ENCODE measurements at regions of chr1 and their contacts with region 1.

Region 1: DNA sequence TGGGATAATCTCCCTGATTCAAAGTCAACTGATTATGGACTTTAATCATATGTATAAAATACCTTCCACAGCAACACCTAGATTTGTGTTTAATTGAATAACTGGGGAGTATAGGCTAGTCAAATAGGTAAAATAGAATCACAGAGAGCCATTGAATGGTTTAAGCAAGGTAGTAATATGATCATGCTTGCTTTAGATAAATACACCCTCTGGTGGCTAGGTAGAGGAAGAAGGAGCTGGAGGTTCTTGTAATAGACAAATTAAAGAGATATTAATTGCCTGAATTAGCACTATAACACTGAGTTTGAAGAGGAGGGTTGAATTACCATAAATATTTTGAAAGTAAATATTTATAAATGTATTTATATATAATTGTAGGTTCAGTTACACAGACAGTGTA is 40.3 kb downstream of the DIRAS3 start:
- DNase-seq: no peak
- H3K4me3 ChIP-seq: no peak overlapping the region
- H3K27ac ChIP-seq: no peak overlapping the region
- H3K4me1 ChIP-seq: no peaks in the 10 kb centered on the region
- H3K27me3 ChIP-seq: no peaks in the 10 kb centered on the region
- CTCF ChIP-seq: peak in 2 of 3 experiments; percentile 24 to 36; a peak in 2 of 4 replicates
- EP300 ChIP-seq: no peak
- POLR2A ChIP-seq: no peak
- RAD21 ChIP-seq: peak; percentile 56 to 60

Region 2: DNA sequence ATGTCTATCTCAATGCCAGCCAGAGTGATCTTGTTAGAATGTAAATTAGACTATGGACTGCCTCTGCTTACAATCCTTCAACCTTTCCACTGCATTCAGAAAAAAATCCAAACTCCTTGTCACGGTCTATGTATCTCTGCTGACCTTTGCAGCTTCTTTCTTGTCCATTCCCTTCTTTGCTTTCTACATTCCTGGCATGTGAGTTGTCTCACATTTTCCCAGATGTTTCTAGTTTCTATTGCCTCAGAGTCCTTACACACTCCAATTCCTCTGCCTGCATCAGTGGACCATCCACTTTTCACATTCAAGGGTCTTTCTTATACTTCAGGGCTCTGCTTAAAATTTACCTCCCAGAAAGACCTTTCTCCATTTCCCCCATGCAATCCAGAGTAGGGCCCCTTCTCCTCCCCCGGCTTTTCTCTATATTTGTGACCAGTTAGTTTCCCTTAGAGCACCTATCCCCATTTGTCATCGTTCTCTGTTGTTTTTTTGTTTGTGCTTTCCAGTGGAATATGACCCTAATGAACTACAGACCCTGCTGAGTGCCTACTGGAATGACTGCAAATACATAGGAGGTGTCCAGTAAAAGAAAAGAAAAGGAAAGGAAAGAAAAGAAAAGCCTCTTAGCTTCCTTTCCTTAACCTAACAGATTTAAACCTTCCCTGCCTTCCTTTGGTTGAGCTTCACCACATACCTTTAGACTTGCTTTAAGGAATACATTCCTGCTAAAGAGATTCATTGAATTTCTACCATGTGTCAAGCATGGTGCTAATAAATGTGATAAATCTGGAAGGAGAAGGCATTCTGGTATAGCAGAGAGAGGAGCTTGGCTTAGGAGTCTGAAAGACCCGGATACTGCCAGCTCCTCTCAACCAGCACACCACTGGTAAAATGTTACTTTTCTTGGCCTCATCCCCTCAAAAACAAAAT is 61.7 kb before region 1 on chr1:
- CTCF ChIA-PET with region 1: interaction called, 11 read pairs
- POLR2A ChIA-PET with region 1: no interaction called
- DNase-seq: no peak
- H3K4me3 ChIP-seq: no peak overlapping the region
- H3K27ac ChIP-seq: no peak overlapping the region
- H3K4me1 ChIP-seq: no peaks in the 10 kb centered on the region; a peak in 1 of 7 replicates
- H3K27me3 ChIP-seq: no peaks in the 10 kb centered on the region
- CTCF ChIP-seq: no peak
- EP300 ChIP-seq: no peak
- POLR2A ChIP-seq: no peak
- RAD21 ChIP-seq: no peak

Region 3: GRCh38 chr1:67997746-67998145 is 12.3 kb before region 1 on chr1:
- CTCF ChIA-PET with region 1: interaction called, 31 read pairs
- POLR2A ChIA-PET with region 1: no interaction called
- DNase-seq: no peak
- H3K4me3 ChIP-seq: no peak overlapping the region
- H3K27ac ChIP-seq: no peak overlapping the region
- H3K4me1 ChIP-seq: no peaks in the 10 kb centered on the region
- H3K27me3 ChIP-seq: no peaks in the 10 kb centered on the region
- CTCF ChIP-seq: no peak
- EP300 ChIP-seq: no peak
- POLR2A ChIP-seq: no peak
- RAD21 ChIP-seq: no peak

Region 4: DNA sequence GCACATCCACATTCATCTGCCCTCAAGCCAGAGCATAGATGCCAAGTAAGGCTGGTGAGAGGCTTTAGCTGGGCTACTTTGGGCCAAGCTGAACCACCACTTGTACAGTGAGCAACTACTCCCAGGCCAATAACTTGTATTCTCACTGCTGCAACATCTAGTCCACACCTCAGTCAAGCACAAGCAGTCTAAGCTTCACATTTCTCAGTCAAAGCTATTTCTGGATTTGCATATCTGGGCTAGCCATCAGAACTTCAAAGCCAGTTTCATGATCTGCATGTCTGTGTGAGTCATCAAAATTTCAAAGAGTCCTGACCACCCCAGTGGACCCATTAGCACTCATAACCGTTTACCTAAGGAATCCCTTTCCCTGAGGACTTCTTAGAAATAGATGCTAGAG is 118.1 kb after region 1 on chr1:
- CTCF ChIA-PET with region 1: no interaction called
- POLR2A ChIA-PET with region 1: no interaction called
- DNase-seq: no peak
- H3K4me3 ChIP-seq: no peak overlapping the region
- H3K27ac ChIP-seq: no peak overlapping the region
- H3K4me1 ChIP-seq: peaks cover 0 to 4% (median 0%) of the 10 kb centered on the region in 4 experiments; a peak in 2 of 7 replicates
- H3K27me3 ChIP-seq: no peaks in the 10 kb centered on the region
- CTCF ChIP-seq: no peak
- EP300 ChIP-seq: no peak
- POLR2A ChIP-seq: no peak
- RAD21 ChIP-seq: no peak